ENCODE measurements at regions of chr4 and their contacts with region 1.

Region 1: GRCh38 chr4:18593445-18594002 is 572.0 kb upstream of the LCORL start:
- DNase-seq: peak in 13 of 14 experiments; percentile 5 to 77 (median 23)
- ATAC-seq: peak; percentile 62
- H3K4me3 ChIP-seq: no peak overlapping the region
- H3K4me3 Mint-ChIP-seq: no peak overlapping the region
- H3K27ac ChIP-seq: no peak overlapping the region
- H3K27ac Mint-ChIP-seq: no peak overlapping the region
- H3K4me1 ChIP-seq: peaks cover 5% of the 10 kb centered on the region
- H3K4me1 Mint-ChIP-seq: peaks cover 7% of the 10 kb centered on the region
- H3K27me3 ChIP-seq: peaks cover 0 to 9% of the 10 kb centered on the region in 2 experiments
- H3K27me3 Mint-ChIP-seq: peaks cover 26% of the 10 kb centered on the region
- CTCF ChIP-seq: peak; percentile 81

Region 2: DNA sequence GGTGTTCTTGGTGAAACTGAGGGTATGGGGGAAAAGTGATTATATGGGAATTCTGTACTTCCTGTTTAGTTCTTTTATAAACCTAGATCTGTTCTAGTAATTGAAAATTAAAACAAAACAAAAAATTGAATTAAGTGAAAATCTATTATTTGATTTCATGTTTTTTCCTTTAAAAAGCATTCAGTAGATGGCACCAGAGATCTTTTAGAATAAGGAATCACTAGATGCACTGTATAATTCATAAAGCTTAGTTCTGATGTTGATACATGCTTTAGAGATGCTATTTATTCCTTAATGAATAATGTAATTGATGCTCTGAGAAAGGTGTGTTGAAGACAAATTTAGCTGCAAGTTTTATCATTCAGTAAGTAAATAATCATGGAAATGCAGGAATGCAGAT is 659.2 kb before region 1 on chr4:
- CTCF ChIA-PET with region 1: no interaction called
- POLR2A ChIA-PET with region 1: no interaction called
- intact Hi-C with region 1: loop called in 1 of 2 experiments (anchors 5 kb)
- DNase-seq: no peak
- ATAC-seq: no peak
- H3K4me3 ChIP-seq: no peak overlapping the region
- H3K4me3 Mint-ChIP-seq: no peak overlapping the region
- H3K27ac ChIP-seq: no peak overlapping the region
- H3K27ac Mint-ChIP-seq: no peak overlapping the region
- H3K4me1 ChIP-seq: no peaks in the 10 kb centered on the region
- H3K4me1 Mint-ChIP-seq: no peaks in the 10 kb centered on the region
- H3K27me3 ChIP-seq: no peaks in the 10 kb centered on the region
- H3K27me3 Mint-ChIP-seq: no peaks in the 10 kb centered on the region
- CTCF ChIP-seq: no peak

Region 3: DNA sequence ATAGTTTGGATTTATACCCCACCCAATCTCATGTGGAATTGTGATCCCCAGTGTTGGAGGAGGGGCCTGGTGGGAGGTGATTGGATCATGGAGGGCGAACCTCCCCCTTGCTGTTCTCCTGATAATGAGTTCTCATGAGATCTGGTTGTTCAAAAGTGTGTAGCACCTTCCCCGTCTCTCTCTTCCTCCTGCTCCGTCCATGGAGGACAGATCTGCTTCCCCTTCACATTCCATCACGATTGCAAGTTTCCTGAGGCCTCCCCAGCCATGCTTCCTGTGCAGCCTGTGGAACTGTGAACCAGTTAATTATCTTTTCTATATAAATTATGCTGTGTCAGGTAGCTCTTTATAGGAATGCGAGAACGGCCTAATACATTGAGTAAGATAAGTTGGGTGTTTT is 53.2 kb before region 1 on chr4:
- CTCF ChIA-PET with region 1: no interaction called
- POLR2A ChIA-PET with region 1: no interaction called
- intact Hi-C with region 1: no loop called
- DNase-seq: no peak
- ATAC-seq: no peak
- H3K4me3 ChIP-seq: no peak overlapping the region
- H3K4me3 Mint-ChIP-seq: no peak overlapping the region
- H3K27ac ChIP-seq: no peak overlapping the region
- H3K27ac Mint-ChIP-seq: no peak overlapping the region
- H3K4me1 ChIP-seq: no peaks in the 10 kb centered on the region
- H3K4me1 Mint-ChIP-seq: no peaks in the 10 kb centered on the region
- H3K27me3 ChIP-seq: no peaks in the 10 kb centered on the region
- H3K27me3 Mint-ChIP-seq: peaks cover 9% of the 10 kb centered on the region
- CTCF ChIP-seq: no peak

Region 4: DNA sequence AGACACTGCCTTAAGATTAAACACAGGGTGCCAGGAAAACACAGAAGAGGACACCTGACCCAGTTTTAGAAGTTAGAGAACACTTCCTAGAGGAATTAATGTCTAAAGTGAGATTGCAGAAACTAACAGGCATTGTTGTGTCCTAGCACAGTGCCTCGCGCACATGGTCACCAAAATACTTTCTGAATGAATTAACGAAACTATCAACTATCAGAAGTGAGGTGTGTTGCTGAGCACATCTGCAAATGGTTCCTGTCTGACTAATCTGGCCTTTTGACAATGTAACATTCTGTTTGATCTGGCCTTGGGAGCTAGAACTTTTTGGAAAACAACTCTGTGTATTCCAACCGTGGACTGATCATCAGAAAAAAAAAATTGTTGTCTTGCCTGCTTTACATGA is 15.2 kb before region 1 on chr4:
- CTCF ChIA-PET with region 1: no interaction called
- POLR2A ChIA-PET with region 1: no interaction called
- intact Hi-C with region 1: no loop called
- DNase-seq: no peak
- ATAC-seq: no peak
- H3K4me3 ChIP-seq: no peak overlapping the region
- H3K4me3 Mint-ChIP-seq: no peak overlapping the region
- H3K27ac ChIP-seq: no peak overlapping the region
- H3K27ac Mint-ChIP-seq: no peak overlapping the region
- H3K4me1 ChIP-seq: no peaks in the 10 kb centered on the region
- H3K4me1 Mint-ChIP-seq: no peaks in the 10 kb centered on the region
- H3K27me3 ChIP-seq: peaks cover 3 to 11% of the 10 kb centered on the region in 2 experiments
- H3K27me3 Mint-ChIP-seq: peaks cover 34% of the 10 kb centered on the region
- CTCF ChIP-seq: no peak

Region 5: GRCh38 chr4:18636001-18636585 is 42.6 kb after region 1 on chr4:
- CTCF ChIA-PET with region 1: no interaction called
- POLR2A ChIA-PET with region 1: no interaction called
- intact Hi-C with region 1: no loop called
- DNase-seq: no peak
- ATAC-seq: no peak
- H3K4me3 ChIP-seq: no peak overlapping the region
- H3K4me3 Mint-ChIP-seq: no peak overlapping the region
- H3K27ac ChIP-seq: no peak overlapping the region
- H3K27ac Mint-ChIP-seq: no peak overlapping the region
- H3K4me1 ChIP-seq: no peaks in the 10 kb centered on the region
- H3K4me1 Mint-ChIP-seq: no peaks in the 10 kb centered on the region
- H3K27me3 ChIP-seq: peaks cover 0 to 2% of the 10 kb centered on the region in 2 experiments
- H3K27me3 Mint-ChIP-seq: no peaks in the 10 kb centered on the region
- CTCF ChIP-seq: no peak

Region 6: GRCh38 chr4:18695733-18696527 is 102.4 kb after region 1 on chr4:
- CTCF ChIA-PET with region 1: no interaction called
- POLR2A ChIA-PET with region 1: no interaction called
- intact Hi-C with region 1: no loop called
- DNase-seq: no peak
- ATAC-seq: no peak
- H3K4me3 ChIP-seq: no peak overlapping the region
- H3K4me3 Mint-ChIP-seq: no peak overlapping the region
- H3K27ac ChIP-seq: no peak overlapping the region
- H3K27ac Mint-ChIP-seq: no peak overlapping the region
- H3K4me1 ChIP-seq: no peaks in the 10 kb centered on the region
- H3K4me1 Mint-ChIP-seq: no peaks in the 10 kb centered on the region
- H3K27me3 ChIP-seq: no peaks in the 10 kb centered on the region
- H3K27me3 Mint-ChIP-seq: no peaks in the 10 kb centered on the region
- CTCF ChIP-seq: no peak

Measured in CD4-positive, alpha-beta T cell (primary cell).